Sigmoid colon (tissue), 7 donors: ENCODE measurements at regions of chr4 and their contacts with region 1.

Region 1: DNA sequence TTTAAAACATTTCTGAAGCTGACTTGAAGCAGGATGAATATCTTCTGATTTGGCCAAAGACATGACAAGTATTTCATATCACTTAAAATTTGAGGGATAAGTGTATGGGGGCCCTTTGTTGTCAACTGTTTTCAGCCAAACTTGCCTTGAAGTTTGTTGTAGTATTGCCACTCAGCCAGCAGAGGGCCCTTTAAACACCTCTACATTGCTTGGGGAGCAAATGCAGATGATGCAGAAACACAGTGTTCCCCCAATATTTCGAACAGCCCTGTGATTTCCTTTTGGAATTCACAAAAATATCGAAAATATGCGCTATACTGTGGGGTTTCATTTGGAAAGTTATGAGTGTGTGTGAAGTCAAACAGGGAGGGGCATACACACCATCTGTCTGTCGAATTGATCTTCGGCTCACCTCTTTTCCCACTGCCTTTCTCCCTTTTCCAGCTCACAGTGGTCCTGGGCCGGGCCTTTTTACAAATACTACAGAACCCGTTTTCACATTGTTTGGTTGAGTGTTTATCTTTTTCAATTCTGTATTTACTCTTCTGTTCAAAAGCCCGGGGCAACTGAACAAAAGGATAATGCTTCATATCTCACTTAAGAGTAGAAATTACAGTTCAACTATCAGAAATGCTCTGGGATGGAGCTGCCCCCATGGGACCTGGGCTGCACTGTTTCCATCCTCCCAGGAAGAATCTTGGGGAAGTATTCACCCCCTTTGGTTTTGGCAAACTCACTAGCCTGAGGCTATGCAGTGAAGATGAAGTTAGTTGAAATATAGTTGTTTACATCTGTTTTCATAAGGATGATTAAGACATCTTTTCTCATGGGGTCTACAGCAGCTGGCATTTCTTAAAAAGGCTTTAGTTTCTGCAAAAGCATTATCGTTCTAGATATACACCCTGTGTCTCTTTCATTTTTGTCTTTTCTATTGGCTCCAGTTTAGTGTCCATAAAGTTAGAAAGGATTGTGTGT is 137.6 kb downstream of the EGF start:
- DNase-seq: no peak
- H3K4me3 ChIP-seq: no peak overlapping the region
- H3K27ac ChIP-seq: no peak overlapping the region
- H3K4me1 ChIP-seq: no peaks in the 10 kb centered on the region
- H3K27me3 ChIP-seq: no peaks in the 10 kb centered on the region
- CTCF ChIP-seq: peak; percentile 40 to 71 (median 56)
- EP300 ChIP-seq: no peak
- POLR2A ChIP-seq: no peak

Region 2: DNA sequence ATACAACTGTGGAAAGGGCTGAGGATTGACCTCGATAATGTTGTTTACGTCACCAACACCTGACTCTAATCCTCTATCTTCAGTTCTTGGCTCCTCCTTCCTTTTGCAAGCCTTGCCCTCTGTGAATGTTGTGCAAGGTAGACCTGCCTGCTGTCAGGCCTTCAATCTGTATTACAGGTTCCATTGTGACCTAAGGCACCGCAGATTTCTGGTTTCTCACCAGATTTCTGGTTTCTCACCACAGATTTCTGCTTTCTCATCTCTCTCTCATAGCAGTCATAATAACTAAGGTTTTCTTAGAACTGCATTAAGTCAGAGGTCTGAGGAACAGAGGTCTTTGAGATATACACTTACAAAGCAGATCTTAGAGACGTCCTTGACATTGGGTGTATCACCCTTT is 1235.9 kb before region 1 on chr4:
- intact Hi-C with region 1: no loop called
- DNase-seq: no peak
- H3K4me3 ChIP-seq: no peak overlapping the region
- H3K27ac ChIP-seq: no peak overlapping the region
- H3K4me1 ChIP-seq: no peaks in the 10 kb centered on the region
- H3K27me3 ChIP-seq: no peaks in the 10 kb centered on the region
- CTCF ChIP-seq: no peak
- EP300 ChIP-seq: no peak
- POLR2A ChIP-seq: no peak

Region 3: DNA sequence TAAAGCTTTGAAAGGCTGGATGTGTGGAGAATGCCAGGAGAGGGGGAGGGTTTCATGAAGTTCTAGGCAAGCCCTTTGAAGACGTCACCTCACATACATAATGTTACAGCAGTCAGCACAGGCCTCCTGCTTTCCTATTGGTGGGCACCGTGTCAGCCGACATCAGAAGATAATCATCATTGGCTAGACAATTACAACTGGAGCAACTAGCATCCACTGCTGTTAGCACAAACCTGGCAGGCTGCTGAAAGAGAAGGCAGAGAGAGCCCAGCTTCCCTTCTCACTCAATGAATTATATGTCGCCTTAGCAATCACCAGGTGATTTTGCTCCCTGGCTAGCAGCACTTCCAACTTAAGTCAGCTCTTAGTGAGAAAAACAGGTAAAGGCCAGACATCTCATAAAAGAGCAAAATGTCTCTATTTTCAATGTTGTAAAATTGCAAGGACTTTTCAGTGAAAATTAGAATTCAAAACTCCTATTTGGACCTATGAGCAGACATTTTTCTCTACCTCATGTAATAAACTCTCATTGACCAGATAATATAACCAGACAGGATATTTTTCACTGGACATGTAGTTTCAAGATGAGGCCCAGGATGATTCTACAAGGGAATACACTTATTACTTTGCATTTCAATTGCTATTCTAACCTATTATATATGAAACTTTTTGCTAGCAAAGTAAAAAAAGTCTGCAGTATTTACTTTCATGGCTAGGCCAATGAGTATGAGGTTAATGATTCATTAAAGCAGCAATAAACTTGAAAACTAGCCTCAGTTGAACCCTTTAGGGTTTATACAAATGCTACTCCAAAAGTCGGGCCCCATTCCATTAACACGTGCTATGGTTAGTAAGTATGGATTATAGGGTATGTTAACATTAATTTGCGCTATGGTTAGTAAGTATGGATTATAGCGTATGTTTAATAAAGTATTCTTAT is 143.9 kb after region 1 on chr4:
- intact Hi-C with region 1: loop called (anchors 5 kb)
- DNase-seq: peak; percentile 83
- H3K4me3 ChIP-seq: no peak overlapping the region
- H3K27ac ChIP-seq: peak overlapping the region in 3 of 4 donors; percentile 8 to 35 (median 26)
- H3K4me1 ChIP-seq: peaks cover 0 to 22% (median 14%) of the 10 kb centered on the region in 4 donors
- H3K27me3 ChIP-seq: no peaks in the 10 kb centered on the region
- CTCF ChIP-seq: no peak
- EP300 ChIP-seq: no peak
- POLR2A ChIP-seq: peak; percentile 14 to 52

Region 4: DNA sequence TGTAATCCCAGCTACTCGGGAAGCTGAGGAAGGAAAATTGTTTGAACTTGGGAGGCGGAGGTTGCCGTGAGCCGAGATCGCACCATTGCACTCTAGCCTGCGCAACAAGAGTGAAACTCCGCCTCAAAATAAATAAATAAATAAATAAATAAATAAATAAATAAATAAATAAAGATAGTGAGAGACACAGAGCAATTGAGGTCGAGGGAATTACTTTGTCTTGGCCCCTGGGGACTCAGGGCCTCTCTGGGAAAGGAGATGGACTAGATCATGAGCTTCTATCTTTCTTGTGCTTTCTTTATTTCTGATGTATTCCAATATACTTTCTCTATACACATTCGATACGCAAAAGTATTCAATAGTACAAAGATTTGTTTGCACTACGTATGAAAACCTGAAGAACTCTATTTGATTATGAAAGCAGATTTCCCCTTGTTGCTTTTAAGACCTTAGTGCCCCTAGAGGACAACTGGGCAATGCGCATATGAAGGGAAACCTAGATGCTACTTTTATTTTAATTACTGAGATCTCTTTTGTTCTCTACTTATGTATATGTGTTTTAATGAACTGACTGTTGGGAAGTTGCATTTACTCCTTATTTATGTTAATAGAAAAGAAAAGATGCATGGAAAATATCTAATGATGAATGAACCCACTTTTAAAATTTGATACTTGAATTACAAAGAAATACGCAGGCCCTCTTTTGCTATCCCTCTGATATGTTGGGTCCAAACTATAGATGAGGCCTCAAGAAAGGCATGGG is 160.9 kb after region 1 on chr4:
- intact Hi-C with region 1: loop called (anchors 5 kb)
- DNase-seq: no peak
- H3K4me3 ChIP-seq: no peak overlapping the region
- H3K27ac ChIP-seq: no peak overlapping the region
- H3K4me1 ChIP-seq: no peaks in the 10 kb centered on the region
- H3K27me3 ChIP-seq: no peaks in the 10 kb centered on the region
- CTCF ChIP-seq: peak; percentile 10 to 66 (median 50)
- EP300 ChIP-seq: no peak
- POLR2A ChIP-seq: no peak

Region 5: GRCh38 chr4:110224812-110225211 is 174.6 kb after region 1 on chr4:
- intact Hi-C with region 1: no loop called
- DNase-seq: no peak
- H3K4me3 ChIP-seq: no peak overlapping the region
- H3K27ac ChIP-seq: no peak overlapping the region
- H3K4me1 ChIP-seq: no peaks in the 10 kb centered on the region
- H3K27me3 ChIP-seq: no peaks in the 10 kb centered on the region
- CTCF ChIP-seq: no peak
- EP300 ChIP-seq: no peak
- POLR2A ChIP-seq: no peak

Region 6: DNA sequence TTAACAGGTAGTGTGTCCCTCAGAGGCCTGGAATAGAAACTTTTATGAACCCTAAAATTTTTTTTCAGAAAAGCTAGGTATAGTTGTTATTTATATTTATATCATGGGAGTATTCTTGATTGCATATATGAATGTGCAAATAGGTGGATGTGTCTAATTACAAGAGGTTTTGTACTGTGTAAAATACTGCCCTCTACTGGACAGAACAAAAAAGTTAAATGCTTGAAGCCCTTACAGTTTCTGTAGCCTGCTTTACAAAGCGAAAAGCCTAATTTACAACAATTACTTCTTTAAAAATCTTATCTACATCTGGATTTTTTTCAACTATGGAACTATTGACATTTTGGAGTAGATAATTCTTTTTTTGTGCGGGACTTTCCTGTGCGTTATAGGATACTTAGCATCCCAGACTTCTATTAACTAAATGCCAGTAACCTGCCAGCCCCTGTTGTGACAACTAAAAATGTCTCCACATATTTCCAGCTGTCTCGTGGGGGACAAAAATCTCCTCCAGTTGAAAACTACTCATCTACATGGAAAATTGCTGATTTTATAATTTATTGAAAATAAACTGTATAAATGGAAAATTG is 460.8 kb after region 1 on chr4:
- intact Hi-C with region 1: loop called (anchors 5 kb)
- DNase-seq: no peak
- H3K4me3 ChIP-seq: no peak overlapping the region
- H3K27ac ChIP-seq: no peak overlapping the region
- H3K4me1 ChIP-seq: no peaks in the 10 kb centered on the region
- H3K27me3 ChIP-seq: no peaks in the 10 kb centered on the region
- CTCF ChIP-seq: peak in 3 of 4 experiments; percentile 30 to 66 (median 34)
- EP300 ChIP-seq: no peak
- POLR2A ChIP-seq: no peak